AG04450 (cell line): ENCODE measurements at regions of chr20 and their contacts with region 1.

Region 1: GRCh38 chr20:3563548-3564177 is 92.8 kb downstream of the ATRN start:
- DNase-seq: peak; percentile 7
- H3K4me3 ChIP-seq: no peak overlapping the region
- H3K27ac ChIP-seq: no peak overlapping the region
- H3K27me3 ChIP-seq: no peaks in the 10 kb centered on the region
- CTCF ChIP-seq: peak; percentile 81

Region 2: DNA sequence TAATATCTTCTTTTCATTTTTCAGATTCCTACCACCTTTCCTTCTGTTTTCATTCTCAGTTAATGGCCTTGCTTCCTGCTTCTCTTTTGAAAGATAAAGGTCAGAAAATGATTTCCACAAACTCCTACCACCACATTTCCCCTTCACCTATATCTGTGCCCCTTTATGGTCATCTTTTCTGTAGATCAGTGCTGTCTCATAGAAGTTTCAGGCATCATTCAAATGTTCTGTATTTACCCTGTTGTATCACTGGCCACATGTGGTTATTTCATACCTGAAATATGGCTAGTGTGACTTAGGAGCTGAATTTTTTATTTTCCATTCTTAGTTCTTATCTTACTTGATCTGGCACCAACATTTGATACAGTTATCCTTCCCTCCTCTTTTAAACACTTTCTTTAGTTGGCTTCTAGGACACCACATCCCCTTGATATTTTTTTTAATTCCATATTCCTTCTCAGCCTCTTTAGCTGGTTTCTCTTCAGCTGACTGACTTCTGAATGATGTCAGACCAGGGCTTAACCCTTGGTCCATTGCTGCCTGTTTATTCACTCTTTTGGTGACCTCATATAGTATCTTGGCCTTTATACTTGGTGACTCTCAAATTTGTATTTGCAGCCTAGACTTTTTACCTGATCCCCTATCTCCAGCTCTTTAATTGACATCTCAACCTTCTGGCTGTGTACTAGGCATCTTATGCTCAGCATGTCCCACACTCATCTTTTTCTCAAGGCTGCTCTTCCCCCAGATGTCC is 11.8 kb before region 1 on chr20:
- CTCF ChIA-PET with region 1: interaction called, 27 read pairs
- POLR2A ChIA-PET with region 1: no interaction called
- DNase-seq: no peak
- H3K4me3 ChIP-seq: no peak overlapping the region
- H3K27ac ChIP-seq: no peak overlapping the region
- H3K27me3 ChIP-seq: no peaks in the 10 kb centered on the region
- CTCF ChIP-seq: no peak

Region 3: GRCh38 chr20:3580412-3580811 is 16.7 kb after region 1 on chr20:
- CTCF ChIA-PET with region 1: interaction called, 11 read pairs
- POLR2A ChIA-PET with region 1: no interaction called
- DNase-seq: no peak
- H3K4me3 ChIP-seq: no peak overlapping the region
- H3K27ac ChIP-seq: no peak overlapping the region
- H3K27me3 ChIP-seq: no peaks in the 10 kb centered on the region
- CTCF ChIP-seq: no peak

Region 4: DNA sequence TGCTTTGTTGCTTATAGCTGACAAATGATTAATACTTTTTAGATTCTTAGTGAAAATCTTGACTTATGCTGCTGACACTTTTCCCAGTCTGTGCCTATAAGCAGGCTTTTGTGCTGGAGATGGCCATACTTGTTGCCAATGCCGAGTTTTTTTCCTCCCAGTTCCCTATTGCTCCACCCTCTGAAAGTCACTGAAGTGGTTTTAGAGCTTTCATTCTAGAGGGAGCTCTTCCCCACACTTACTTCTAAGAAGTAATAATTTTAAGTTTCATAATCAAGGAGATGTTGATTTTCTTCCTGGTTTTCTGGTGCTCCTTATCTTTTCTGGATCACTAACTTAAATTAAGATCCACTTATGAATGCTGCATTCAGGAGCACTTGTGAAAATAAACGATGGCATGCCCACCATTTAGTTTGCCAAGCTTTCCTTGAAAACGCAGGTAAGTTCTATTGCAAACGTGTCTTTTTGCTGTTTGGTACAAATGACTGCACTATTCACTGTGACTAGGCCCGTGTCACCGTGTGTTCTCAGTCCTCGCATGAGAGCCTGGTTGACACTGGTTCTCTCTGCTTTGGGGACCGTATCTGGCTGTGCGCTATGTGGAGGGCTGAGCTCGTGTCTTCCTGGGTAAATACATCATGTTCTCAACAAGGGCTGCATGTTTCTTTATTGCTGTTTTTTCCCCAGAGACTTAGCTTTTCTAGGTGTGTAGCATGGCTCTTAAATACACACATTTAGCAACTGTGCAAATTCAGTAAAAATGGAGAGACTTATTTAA is 49.3 kb after region 1 on chr20:
- CTCF ChIA-PET with region 1: interaction called, 11 read pairs
- POLR2A ChIA-PET with region 1: no interaction called
- DNase-seq: no peak
- H3K4me3 ChIP-seq: no peak overlapping the region
- H3K27ac ChIP-seq: no peak overlapping the region
- H3K27me3 ChIP-seq: no peaks in the 10 kb centered on the region
- CTCF ChIP-seq: 0 out of 2 replicates have a peak, but pooled peaks have one; percentile 23

Region 5: DNA sequence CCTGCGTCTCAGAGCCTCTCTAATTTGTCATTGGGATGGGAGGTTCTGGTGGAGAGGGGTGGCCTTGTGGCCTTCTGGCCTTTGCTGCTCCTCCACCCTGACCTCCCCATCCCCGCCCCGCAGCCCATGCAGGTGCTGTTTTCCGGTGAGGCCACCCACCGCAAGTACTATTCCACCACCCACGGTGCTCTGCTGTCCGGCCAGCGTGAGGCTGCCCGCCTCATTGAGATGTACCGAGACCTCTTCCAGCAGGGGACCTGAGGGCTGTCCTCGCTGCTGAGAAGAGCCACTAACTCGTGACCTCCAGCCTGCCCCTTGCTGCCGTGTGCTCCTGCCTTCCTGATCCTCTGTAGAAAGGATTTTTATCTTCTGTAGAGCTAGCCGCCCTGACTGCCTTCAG is 623.5 kb after region 1 on chr20:
- CTCF ChIA-PET with region 1: no interaction called
- POLR2A ChIA-PET with region 1: no interaction called
- DNase-seq: no peak
- H3K4me3 ChIP-seq: no peak overlapping the region
- H3K27ac ChIP-seq: no peak overlapping the region
- H3K27me3 ChIP-seq: no peaks in the 10 kb centered on the region
- CTCF ChIP-seq: no peak